MCF 10A (cell line): ENCODE measurements at regions of chr11 and their contacts with region 1.

Region 1: DNA sequence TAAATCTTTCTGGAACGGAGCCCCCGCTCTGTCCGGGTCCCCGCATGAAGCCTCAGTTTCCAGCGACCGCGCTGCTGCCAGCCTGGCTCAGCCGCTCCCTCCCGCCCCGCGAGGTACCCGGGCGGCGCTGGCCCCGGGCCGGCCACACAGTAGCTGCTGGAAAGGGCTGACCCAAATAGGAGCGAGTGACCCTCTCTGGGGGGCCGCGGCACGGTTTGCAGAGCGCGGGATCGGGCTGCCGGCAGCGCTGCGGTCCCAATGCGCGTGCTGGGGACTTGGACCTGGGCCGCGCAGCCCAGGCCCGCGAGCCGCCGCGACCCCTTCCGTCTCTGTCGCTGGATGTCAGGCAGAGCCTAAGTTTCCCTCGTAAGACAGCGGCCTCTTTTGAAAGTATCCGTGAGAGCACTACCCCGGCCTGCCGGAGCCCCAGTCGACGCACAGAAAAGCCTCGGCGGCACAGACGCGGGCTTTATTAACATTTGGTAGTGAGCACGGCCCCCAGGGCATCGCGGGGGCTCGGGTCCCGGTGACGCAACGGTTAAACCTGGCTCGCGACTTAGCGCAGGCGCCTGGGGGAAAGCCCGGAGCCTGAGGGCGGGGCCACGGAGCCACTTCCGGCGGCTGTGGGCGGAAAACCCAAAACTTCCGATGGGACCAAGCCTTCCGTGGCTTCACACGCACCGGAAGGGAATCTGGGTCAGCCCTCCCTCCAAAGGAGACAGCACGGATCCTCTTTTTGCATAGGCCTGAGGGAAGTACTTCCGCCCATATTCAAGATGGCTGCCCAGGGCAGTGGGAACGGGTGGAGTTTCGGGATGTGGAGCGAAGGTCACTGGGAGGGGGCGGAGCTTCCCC is 14.9 kb downstream of the BAD start:
- DNase-seq: peak; percentile 100
- H3K4me3 Mint-ChIP-seq: peak overlapping the region; percentile 96
- H3K27ac Mint-ChIP-seq: peak overlapping the region; percentile 96
- H3K4me1 Mint-ChIP-seq: peaks cover 23% of the 10 kb centered on the region
- H3K27me3 Mint-ChIP-seq: no peaks in the 10 kb centered on the region
- CTCF ChIP-seq: peak; percentile 1

Region 2: GRCh38 chr11:63582935-63583677 is 686.5 kb before region 1 on chr11:
- CTCF ChIA-PET with region 1: no interaction called
- POLR2A ChIA-PET with region 1: no interaction called
- intact Hi-C with region 1: no loop called
- DNase-seq: no peak
- H3K4me3 Mint-ChIP-seq: no peak overlapping the region
- H3K27ac Mint-ChIP-seq: no peak overlapping the region
- H3K4me1 Mint-ChIP-seq: no peaks in the 10 kb centered on the region
- H3K27me3 Mint-ChIP-seq: no peaks in the 10 kb centered on the region
- CTCF ChIP-seq: no peak

Region 3: DNA sequence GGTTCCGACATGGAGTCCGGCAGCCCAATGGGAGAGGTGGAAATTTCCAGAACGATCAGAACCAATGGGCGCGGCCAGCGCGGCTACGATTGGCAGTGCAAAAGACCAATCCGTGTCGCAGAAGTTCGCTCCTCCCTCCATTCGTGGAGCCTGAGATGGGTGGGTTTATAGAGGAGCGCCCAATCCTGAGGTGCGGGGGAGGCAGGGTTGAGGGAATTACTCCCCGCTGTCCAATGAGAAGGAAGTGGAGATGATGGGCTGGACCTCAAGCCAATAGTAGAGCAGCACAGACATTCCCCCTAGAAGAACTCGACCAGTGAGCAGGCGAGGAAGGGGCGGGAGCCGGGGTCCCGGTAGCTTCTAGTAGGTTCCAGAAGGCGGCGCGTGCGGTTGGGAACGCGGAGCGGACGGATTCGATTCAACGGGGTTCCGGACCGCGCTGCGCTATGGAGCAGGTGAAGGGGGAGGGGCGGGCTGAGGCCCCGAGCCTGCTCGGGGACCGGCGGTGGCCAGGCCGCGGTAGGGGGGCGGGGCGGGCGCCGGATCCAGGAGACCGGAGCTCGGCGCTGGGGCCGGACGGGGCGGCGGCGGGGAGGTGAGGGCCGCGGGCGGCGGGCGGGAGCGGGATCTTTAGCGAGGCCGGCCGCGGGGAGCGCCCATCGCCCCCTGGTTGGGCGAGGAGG is 83.7 kb before region 1 on chr11 and contains the start of gene STIP1:
- CTCF ChIA-PET with region 1: interaction called, 3 read pairs
- POLR2A ChIA-PET with region 1: interaction called, 10 read pairs
- intact Hi-C with region 1: no loop called
- DNase-seq: peak; percentile 100
- H3K4me3 Mint-ChIP-seq: no peak within 1 kb of the TSS
- H3K27ac Mint-ChIP-seq: no peak within 1 kb of the TSS
- H3K4me1 Mint-ChIP-seq: peaks cover 7% of the 10 kb centered on the region
- H3K27me3 Mint-ChIP-seq: no peaks in the 10 kb centered on the region
- CTCF ChIP-seq: peak; percentile 23
- total RNA-seq, gene STIP1: 161 and 171 TPM in 2 replicates

Region 4: DNA sequence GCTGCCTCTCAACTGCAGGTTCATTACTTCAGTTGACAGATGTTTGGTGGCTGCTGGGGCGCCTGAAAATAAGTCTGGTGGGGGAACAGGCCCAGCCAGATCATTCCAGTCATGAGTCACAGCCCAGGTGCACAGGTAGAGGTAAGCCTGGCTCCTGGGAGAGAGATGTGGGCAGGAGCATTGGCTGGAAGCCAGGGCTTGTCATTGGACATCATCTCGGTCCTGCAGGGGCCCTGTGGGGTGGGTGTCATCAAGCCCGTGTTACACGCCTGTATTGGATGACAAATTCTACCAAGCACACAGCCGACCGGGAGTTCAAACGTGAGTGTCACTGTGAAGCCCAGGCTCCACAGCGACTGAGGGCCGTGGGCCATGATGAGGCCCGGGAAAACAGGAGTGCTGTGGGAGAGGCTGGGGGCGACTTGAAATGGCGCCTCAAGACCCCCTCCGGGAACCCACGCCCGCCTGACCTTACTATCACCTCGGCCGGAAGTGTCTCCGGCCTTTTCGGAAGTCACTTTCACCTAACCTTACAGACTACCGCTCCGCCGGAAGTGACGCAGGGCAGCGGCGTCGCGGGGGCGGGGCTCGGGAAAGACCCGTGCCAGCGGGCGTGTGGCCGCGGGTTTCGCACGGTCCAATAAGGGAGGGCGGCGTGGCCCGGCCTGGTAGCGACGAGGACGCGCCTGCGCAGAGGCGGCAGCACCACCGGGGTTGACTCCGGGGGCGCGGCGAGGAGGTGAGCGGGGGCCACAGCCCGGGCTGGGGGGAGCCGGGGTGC is 29.0 kb before region 1 on chr11 and contains the start of gene FKBP2:
- CTCF ChIA-PET with region 1: interaction called, 8 read pairs
- POLR2A ChIA-PET with region 1: interaction called, 75 read pairs
- intact Hi-C with region 1: no loop called
- DNase-seq: peak; percentile 96
- H3K4me3 Mint-ChIP-seq: peak within 1 kb of the TSS; percentile 93
- H3K27ac Mint-ChIP-seq: peak within 1 kb of the TSS; percentile 98
- H3K4me1 Mint-ChIP-seq: peaks cover 19% of the 10 kb centered on the region
- H3K27me3 Mint-ChIP-seq: no peaks in the 10 kb centered on the region
- CTCF ChIP-seq: no peak
- total RNA-seq, gene FKBP2: 84.7 and 86.0 TPM in 2 replicates

Region 5: GRCh38 chr11:64252003-64252872 is 17.4 kb before region 1 on chr11:
- CTCF ChIA-PET with region 1: interaction called, 36 read pairs
- POLR2A ChIA-PET with region 1: interaction called, 75 read pairs
- intact Hi-C with region 1: loop called (anchors 1 kb)
- DNase-seq: peak; percentile 69
- H3K4me3 Mint-ChIP-seq: peak overlapping the region; percentile 87
- H3K27ac Mint-ChIP-seq: peak overlapping the region; percentile 89
- H3K4me1 Mint-ChIP-seq: peaks cover 6% of the 10 kb centered on the region
- H3K27me3 Mint-ChIP-seq: no peaks in the 10 kb centered on the region
- CTCF ChIP-seq: no peak

Region 6: GRCh38 chr11:64297699-64298358 is 28.2 kb after region 1 on chr11:
- CTCF ChIA-PET with region 1: interaction called, 70 read pairs
- POLR2A ChIA-PET with region 1: interaction called, 92 read pairs
- intact Hi-C with region 1: no loop called
- DNase-seq: no peak
- H3K4me3 Mint-ChIP-seq: no peak overlapping the region
- H3K27ac Mint-ChIP-seq: no peak overlapping the region
- H3K4me1 Mint-ChIP-seq: peaks cover 10% of the 10 kb centered on the region
- H3K27me3 Mint-ChIP-seq: no peaks in the 10 kb centered on the region
- CTCF ChIP-seq: no peak

Region 7: GRCh38 chr11:64331557-64332371 is 62.2 kb after region 1 on chr11:
- CTCF ChIA-PET with region 1: interaction called, 7 read pairs
- POLR2A ChIA-PET with region 1: interaction called, 18 read pairs
- intact Hi-C with region 1: no loop called
- DNase-seq: peak; percentile 98
- H3K4me3 Mint-ChIP-seq: peak overlapping the region; percentile 8
- H3K27ac Mint-ChIP-seq: peak overlapping the region; percentile 61
- H3K4me1 Mint-ChIP-seq: peaks cover 20% of the 10 kb centered on the region
- H3K27me3 Mint-ChIP-seq: no peaks in the 10 kb centered on the region
- CTCF ChIP-seq: peak; percentile 79